Adrenal gland (tissue), 19 donors: ENCODE measurements at regions of chr2 and their contacts with region 1.

Region 1: GRCh38 chr2:30115141-30115980 is 31.4 kb upstream of the YPEL5 start:
- DNase-seq: peak; percentile 79 to 96 (median 90)
- H3K4me3 ChIP-seq: no peak overlapping the region
- H3K27ac ChIP-seq: no peak overlapping the region
- H3K4me1 ChIP-seq: peaks cover 0 to 4% of the 10 kb centered on the region in 2 donors
- H3K27me3 ChIP-seq: no peaks in the 10 kb centered on the region
- CTCF ChIP-seq: peak; percentile 89 to 97 (median 95)
- POLR2A ChIP-seq: no peak

Region 2: GRCh38 chr2:30095402-30095801 is 20.0 kb before region 1 on chr2:
- intact Hi-C with region 1: loop called in 1 of 2 experiments (anchors 2 kb)
- DNase-seq: no peak
- H3K4me3 ChIP-seq: no peak overlapping the region
- H3K27ac ChIP-seq: no peak overlapping the region
- H3K4me1 ChIP-seq: no peaks in the 10 kb centered on the region
- H3K27me3 ChIP-seq: peaks cover 3% of the 10 kb centered on the region
- CTCF ChIP-seq: no peak
- POLR2A ChIP-seq: no peak